Calu3 (cell line): ENCODE measurements at regions of chr3 and their contacts with region 1.

Region 1: GRCh38 chr3:190926619-190927018 is 64.1 kb upstream of the GMNC start:
- DNase-seq: no peak
- H3K4me3 Mint-ChIP-seq: no peak overlapping the region
- H3K27ac Mint-ChIP-seq: no peak overlapping the region
- H3K4me1 Mint-ChIP-seq: no peaks in the 10 kb centered on the region
- H3K27me3 Mint-ChIP-seq: no peaks in the 10 kb centered on the region
- CTCF ChIP-seq: no peak

Region 2: DNA sequence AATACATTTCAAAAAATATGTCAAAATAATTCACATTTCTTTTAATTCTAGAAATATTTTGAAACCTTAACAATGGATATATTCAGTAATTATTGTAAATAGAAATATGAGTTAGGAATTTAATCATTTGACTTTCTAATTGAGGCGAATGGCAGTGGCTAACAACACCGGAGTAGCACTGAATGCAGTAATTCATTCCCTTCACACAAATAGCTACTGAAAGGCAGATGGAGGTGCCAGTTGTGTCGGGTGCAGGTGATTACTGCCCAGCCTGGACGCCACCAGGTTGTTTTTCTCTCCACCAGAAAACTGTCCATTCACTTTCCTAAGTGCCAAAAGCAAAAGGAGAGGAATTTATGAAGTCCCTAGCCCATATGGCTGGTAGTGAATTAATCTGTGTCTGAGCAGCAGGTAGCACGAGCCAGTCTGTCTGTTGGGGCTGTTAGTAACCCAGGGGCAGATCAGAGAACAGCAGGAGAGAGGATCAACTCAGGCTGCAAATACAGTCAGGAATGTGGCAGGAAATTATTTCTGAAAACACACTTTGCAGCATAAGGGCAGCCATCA is 15.2 kb after region 1 on chr3:
- CTCF ChIA-PET with region 1: interaction called, 17 read pairs
- intact Hi-C with region 1: no loop called
- DNase-seq: no peak
- H3K4me3 Mint-ChIP-seq: no peak overlapping the region
- H3K27ac Mint-ChIP-seq: no peak overlapping the region
- H3K4me1 Mint-ChIP-seq: no peaks in the 10 kb centered on the region
- H3K27me3 Mint-ChIP-seq: no peaks in the 10 kb centered on the region
- CTCF ChIP-seq: no peak

Region 3: DNA sequence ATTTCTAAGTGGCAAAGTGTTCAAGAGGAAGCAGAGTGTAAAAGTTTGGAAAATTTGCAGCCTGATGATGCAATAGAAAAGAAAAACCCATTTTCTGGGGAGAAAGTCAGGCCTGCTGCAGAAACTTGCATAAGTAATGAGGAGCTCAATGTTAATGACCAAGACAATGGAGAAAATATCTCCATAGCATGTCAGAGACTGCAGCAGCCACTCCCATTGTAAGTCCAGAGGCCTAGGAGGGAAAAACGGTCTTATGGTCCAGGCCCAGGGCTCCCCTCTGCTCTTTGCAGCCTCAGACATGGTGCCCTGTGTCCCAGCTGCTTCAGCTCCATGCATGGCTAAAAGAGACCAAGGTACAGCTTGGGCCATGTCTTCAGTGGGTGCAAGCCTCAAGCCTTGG is 32.5 kb after region 1 on chr3:
- CTCF ChIA-PET with region 1: interaction called, 12 read pairs
- intact Hi-C with region 1: no loop called
- DNase-seq: no peak
- H3K4me3 Mint-ChIP-seq: no peak overlapping the region
- H3K27ac Mint-ChIP-seq: no peak overlapping the region
- H3K4me1 Mint-ChIP-seq: no peaks in the 10 kb centered on the region
- H3K27me3 Mint-ChIP-seq: no peaks in the 10 kb centered on the region
- CTCF ChIP-seq: no peak